WTC11 (cell line): ENCODE measurements at regions of chr16 and their contacts with region 1.

Region 1: DNA sequence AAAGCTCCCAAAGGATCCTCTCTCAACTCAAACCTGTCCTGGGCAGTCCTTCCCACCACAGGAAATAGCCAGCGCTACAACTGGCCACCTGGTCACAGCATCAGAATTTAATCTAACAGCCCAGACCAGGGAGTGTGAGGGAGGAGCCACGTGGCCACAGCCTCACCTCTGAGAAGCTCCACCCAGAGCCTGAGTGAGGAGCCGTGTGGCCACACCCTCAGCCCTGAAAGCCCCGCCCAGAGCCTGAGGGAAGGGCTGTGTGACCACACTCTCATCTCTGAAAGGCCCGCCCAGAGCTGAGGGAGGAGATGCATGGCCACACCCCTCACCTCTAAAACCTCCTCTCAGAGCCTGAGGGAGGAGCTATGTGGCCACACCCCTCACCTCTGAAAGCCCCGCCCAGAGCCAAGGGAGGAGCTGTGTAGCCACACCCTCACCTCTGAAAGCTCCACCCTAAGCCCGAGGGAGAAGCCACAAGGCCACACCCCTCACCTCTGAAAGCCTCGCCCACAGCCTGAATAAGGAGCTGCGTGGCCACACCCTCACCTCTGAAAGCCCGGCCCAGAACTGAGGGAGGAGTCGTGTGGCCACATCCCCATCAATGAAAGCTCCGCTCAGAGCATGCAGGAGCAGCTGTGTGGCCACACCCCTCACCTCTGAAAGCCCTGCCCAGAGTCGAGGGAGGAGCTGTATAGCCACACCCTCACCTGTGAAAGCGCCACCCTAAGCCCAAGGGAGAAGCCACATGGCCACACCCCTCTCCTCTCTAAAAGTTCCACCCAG is 28.6 kb downstream of the SLC38A8 start:
- DNase-seq: peak; percentile 100
- ATAC-seq: peak; percentile 90
- H3K4me3 Mint-ChIP-seq: peak overlapping the region; percentile 56
- H3K27ac Mint-ChIP-seq: peak overlapping the region; percentile 41; the same call in 1 of the 2 replicates
- H3K4me1 Mint-ChIP-seq: peaks cover 6% of the 10 kb centered on the region
- H3K27me3 Mint-ChIP-seq: peaks cover 5% of the 10 kb centered on the region; the same call in 1 of the 2 replicates
- CTCF ChIP-seq: no peak

Region 2: DNA sequence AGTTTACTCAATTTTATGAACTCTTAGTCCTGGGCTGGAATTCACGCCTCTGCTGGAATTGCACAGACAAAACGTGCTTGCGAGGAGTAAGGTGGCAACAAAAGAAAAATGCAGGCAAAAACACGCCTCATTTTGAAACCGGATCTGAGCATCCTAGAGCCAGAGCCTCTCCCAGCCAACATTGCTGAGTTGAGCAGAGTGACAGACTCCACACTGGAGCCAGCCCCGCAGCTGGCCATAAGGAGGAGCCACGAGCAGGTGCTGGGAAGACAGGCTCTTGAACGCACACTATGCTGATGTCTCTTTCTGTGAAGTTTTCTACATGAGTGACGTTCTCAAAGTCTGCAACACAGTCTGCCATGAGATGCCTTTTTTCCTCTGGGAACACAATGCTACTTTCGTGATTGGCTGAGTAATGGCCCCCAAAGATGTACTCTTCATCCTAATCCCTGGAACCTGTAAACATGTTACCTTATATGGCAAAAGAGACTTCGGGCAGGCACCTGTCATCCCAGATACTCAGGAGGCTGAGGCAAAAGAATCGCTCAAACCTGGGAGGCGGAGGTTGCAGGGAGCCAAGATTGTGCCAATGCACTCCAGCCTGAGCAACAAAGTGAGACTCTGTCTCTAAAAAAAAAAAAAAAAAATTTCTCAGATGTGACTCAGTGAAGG is 220.7 kb before region 1 on chr16:
- CTCF ChIA-PET with region 1: no interaction called
- POLR2A ChIA-PET with region 1: no interaction called
- DNase-seq: no peak
- ATAC-seq: peak; percentile 96
- H3K4me3 Mint-ChIP-seq: no peak overlapping the region
- H3K27ac Mint-ChIP-seq: no peak overlapping the region
- H3K4me1 Mint-ChIP-seq: peaks cover 25% of the 10 kb centered on the region
- H3K27me3 Mint-ChIP-seq: no peaks in the 10 kb centered on the region
- CTCF ChIP-seq: no peak

Region 3: DNA sequence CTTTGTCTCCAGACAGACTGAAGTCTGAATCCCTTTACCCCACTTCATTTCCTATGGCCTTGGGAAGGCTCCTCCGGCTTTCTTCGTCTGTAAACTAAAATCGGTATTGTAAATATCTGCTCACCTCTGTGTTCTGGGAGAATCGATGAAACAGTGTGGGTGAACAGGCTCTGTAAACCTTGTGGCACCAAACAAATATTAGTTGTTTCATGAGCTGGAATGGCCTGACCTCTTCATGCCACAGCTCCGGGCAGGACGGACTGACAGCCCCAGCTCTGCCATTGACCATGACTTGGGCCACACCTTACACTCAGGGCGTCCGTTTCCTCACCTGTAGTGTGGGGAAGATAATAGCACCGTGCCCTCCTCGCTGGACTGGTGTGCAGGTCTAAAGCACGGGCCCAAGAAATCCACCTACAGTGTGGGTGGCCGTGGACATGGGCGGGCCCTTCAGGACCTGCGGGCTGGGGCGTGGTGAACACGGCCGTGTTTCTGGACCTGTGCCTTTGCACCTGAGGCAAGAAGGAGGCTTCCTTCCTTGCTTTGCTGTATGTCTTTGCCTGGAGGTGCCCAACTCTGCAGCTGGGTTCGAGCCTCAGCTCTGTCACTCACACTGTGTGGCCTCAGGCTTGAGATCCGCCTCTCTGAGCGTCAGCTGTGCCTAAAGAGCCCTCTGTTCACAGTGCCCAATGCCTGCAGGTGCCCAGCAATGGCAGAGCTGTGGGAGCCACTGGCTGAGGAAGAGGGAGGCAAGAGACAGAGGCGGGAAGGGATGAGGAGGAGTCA is 67.0 kb before region 1 on chr16:
- CTCF ChIA-PET with region 1: no interaction called
- POLR2A ChIA-PET with region 1: no interaction called
- DNase-seq: no peak
- ATAC-seq: no peak
- H3K4me3 Mint-ChIP-seq: no peak overlapping the region
- H3K27ac Mint-ChIP-seq: no peak overlapping the region
- H3K4me1 Mint-ChIP-seq: no peaks in the 10 kb centered on the region
- H3K27me3 Mint-ChIP-seq: no peaks in the 10 kb centered on the region
- CTCF ChIP-seq: no peak

Region 4: GRCh38 chr16:83971165-83972130 is 42.5 kb before region 1 on chr16:
- CTCF ChIA-PET with region 1: interaction called, 11 read pairs
- POLR2A ChIA-PET with region 1: no interaction called
- DNase-seq: no peak
- ATAC-seq: no peak
- H3K4me3 Mint-ChIP-seq: no peak overlapping the region
- H3K27ac Mint-ChIP-seq: no peak overlapping the region
- H3K4me1 Mint-ChIP-seq: peaks cover 7% of the 10 kb centered on the region
- H3K27me3 Mint-ChIP-seq: peaks cover 12% of the 10 kb centered on the region
- CTCF ChIP-seq: no peak

Region 5: GRCh38 chr16:83994087-83994486 is 19.9 kb before region 1 on chr16:
- CTCF ChIA-PET with region 1: interaction called, 28 read pairs
- POLR2A ChIA-PET with region 1: interaction called, 10 read pairs
- DNase-seq: no peak
- ATAC-seq: no peak
- H3K4me3 Mint-ChIP-seq: no peak overlapping the region
- H3K27ac Mint-ChIP-seq: no peak overlapping the region
- H3K4me1 Mint-ChIP-seq: peaks cover 6% of the 10 kb centered on the region
- H3K27me3 Mint-ChIP-seq: no peaks in the 10 kb centered on the region
- CTCF ChIP-seq: no peak

Region 6: GRCh38 chr16:84000989-84001642 is 12.9 kb before region 1 on chr16:
- CTCF ChIA-PET with region 1: interaction called, 28 read pairs
- POLR2A ChIA-PET with region 1: interaction called, 10 read pairs
- DNase-seq: no peak
- ATAC-seq: no peak
- H3K4me3 Mint-ChIP-seq: no peak overlapping the region
- H3K27ac Mint-ChIP-seq: no peak overlapping the region
- H3K4me1 Mint-ChIP-seq: 0 out of 2 replicates have a peak, but pooled peaks cover 1% of the 10 kb centered on the region
- H3K27me3 Mint-ChIP-seq: no peaks in the 10 kb centered on the region
- CTCF ChIP-seq: no peak

Region 7: GRCh38 chr16:84027625-84028024 is 13.6 kb after region 1 on chr16:
- CTCF ChIA-PET with region 1: interaction called, 10 read pairs
- POLR2A ChIA-PET with region 1: interaction called, 6 read pairs
- DNase-seq: no peak
- ATAC-seq: no peak
- H3K4me3 Mint-ChIP-seq: no peak overlapping the region
- H3K27ac Mint-ChIP-seq: no peak overlapping the region
- H3K4me1 Mint-ChIP-seq: peaks cover 15% of the 10 kb centered on the region
- H3K27me3 Mint-ChIP-seq: no peaks in the 10 kb centered on the region
- CTCF ChIP-seq: no peak

Region 8: DNA sequence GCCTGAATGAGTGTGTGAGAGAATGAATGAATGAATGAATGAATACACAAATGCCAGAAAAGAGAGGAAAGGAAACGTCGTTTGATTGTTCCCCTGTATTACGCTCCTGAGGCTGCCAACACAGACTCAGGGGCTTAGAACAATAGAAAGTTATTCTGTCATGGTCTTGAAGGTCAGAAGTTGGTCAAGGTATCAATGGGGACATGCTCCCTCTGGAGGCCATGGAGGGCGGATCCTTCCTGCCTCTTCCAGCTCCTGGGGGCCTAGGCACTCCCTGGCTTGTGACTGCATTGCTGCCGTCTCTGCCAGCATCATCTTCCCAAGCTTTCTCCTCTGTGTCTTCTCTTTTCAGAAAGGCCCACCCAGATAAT is 30.1 kb after region 1 on chr16:
- CTCF ChIA-PET with region 1: interaction called, 27 read pairs
- POLR2A ChIA-PET with region 1: no interaction called
- DNase-seq: peak; percentile 54
- ATAC-seq: peak; percentile 60
- H3K4me3 Mint-ChIP-seq: no peak overlapping the region
- H3K27ac Mint-ChIP-seq: no peak overlapping the region
- H3K4me1 Mint-ChIP-seq: peaks cover 17% of the 10 kb centered on the region
- H3K27me3 Mint-ChIP-seq: no peaks in the 10 kb centered on the region
- CTCF ChIP-seq: peak; percentile 20; the same call in 1 of the 2 replicates